AG04450 (cell line): ENCODE measurements at regions of chr15 and their contacts with region 1.

Region 1: DNA sequence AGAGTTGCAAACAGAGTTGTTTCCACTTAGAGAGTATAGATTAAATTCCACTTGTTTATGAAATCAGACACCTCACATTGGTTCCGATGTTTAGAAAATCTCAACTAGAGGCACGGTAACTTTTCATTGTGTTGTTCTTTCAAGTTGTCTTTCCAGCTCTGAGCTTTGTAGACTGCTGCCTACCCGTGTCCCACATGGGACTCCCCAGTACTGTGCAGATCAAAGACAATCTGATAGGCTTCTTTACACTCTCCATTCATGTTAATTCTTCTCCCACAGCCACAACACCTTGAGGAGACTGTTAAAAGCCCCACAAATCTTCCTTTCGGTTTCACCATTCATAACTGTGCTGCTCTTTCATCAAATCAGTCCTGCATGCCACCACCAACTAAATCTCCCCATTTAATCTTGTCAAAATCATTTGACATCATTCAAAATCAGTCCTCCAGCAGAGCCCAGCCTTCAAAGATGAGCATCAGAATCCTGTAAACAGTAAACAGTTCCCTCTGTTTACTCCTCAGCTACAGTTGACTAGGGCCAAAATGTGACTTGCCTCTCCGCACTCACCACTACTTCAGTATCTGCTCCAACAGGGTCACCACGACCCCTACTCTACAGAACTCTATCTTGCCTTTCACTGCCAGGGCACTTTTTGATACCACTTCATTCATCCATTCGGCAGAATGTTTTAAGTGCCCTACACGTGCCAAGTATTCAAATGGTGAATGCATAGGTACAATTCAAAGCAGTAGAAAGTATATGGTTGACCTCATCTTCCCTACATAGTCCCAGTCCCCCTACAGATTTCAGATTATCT is 8.3 kb downstream of the ANXA2 start:
- DNase-seq: no peak
- H3K4me3 ChIP-seq: peak overlapping the region; percentile 27
- H3K27ac ChIP-seq: no peak overlapping the region
- H3K27me3 ChIP-seq: no peaks in the 10 kb centered on the region
- CTCF ChIP-seq: no peak

Region 2: DNA sequence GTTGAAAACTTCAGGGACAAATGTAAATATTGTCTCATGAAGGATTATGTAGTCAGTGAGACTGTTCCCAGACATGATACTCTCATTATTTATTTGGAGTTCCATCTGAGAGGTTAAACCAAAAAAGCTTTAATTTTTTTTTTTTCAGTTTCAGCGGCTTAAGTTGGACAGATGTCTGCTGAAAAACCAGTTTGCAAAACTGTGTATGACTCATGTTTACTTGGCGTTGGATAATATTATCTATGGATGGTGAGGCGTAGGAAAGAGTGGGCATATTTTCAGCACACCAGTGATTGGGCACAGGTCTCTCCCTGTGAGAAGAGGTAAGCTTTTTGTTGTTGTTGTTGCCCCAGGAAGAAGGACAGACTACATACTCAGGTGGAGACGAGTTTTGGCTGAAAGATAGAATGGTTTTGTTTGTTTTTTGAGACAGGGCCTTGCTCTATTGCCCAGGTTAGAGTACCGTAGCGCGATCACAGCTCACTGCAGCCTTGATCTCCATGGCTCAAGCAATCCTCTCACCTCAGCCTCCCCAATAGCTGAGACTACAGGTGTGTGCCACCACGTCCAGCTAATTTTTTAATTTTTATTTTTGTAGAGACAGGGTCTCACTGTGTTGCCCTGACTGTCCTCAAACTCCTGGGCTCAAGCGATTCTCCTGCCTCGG is 24.7 kb after region 1 on chr15:
- CTCF ChIA-PET with region 1: interaction called, 9 read pairs
- POLR2A ChIA-PET with region 1: interaction called, 10 read pairs
- DNase-seq: no peak
- H3K4me3 ChIP-seq: no peak overlapping the region
- H3K27ac ChIP-seq: no peak overlapping the region
- H3K27me3 ChIP-seq: no peaks in the 10 kb centered on the region
- CTCF ChIP-seq: no peak